ENCODE measurements at regions of chr1 and their contacts with region 1.

Region 1: GRCh38 chr1:32179443-32180185 is at the start of gene TXLNA:
- DNase-seq: peak; percentile 97
- H3K4me3 Mint-ChIP-seq: peak within 1 kb of the TSS; percentile 98
- H3K27ac Mint-ChIP-seq: peak within 1 kb of the TSS; percentile 99
- H3K4me1 Mint-ChIP-seq: peaks cover 39% of the 10 kb centered on the region
- H3K27me3 Mint-ChIP-seq: no peaks in the 10 kb centered on the region
- total RNA-seq, gene TXLNA: 105 and 106 TPM in 2 replicates

Region 2: DNA sequence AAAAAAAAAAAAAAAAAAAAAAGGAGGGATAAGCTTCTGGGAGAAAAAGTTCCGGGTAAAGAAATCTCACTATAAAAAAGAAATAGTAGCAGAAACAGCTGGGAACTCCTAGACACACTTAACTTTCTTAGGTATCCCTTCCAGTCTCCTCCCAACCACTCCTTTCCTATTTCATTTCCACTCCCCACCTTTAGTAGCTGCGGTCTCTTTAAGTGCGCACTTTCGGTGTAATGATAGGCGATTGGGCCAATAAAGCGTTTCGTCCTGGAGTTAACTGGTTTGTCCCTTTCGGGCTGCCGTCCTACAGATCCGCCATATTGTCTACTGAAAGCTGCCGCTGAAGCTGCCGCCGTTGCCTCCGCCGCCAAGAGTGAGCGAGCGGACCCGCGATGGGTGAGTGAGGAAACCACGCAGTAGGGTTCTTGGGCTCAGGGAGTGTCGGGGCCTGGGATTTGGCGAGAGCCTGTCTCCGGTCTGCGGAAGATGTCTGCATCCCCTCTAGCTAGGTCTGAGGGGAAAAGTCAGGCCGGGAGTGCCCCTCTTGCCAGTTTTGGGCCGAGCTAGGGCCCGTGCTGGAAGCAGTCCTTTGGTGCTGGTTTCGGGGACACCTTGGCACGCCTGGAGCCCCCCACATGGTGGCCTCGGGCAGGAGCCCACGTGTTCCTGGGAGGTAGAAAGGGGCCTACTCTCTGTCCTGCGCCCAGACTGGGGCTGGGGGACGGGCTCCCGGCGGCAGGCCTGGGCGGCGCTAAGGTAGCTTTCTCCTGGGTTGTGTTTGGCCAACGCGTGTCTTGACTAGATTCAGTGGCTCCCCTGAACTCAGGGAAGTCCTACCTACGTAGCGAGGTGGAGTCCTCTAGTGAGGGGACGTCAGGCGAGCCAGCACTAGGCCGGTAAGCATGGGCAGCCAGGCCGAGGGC is 71.6 kb before region 1 on chr1 and contains the start of gene KPNA6:
- intact Hi-C with region 1: loop called (anchors 1 kb)
- DNase-seq: peak; percentile 97
- H3K4me3 Mint-ChIP-seq: peak within 1 kb of the TSS; percentile 99
- H3K27ac Mint-ChIP-seq: peak within 1 kb of the TSS; percentile 98
- H3K4me1 Mint-ChIP-seq: peaks cover 31% of the 10 kb centered on the region
- H3K27me3 Mint-ChIP-seq: no peaks in the 10 kb centered on the region
- total RNA-seq, gene KPNA6: 79.4 and 87.6 TPM in 2 replicates

Region 3: DNA sequence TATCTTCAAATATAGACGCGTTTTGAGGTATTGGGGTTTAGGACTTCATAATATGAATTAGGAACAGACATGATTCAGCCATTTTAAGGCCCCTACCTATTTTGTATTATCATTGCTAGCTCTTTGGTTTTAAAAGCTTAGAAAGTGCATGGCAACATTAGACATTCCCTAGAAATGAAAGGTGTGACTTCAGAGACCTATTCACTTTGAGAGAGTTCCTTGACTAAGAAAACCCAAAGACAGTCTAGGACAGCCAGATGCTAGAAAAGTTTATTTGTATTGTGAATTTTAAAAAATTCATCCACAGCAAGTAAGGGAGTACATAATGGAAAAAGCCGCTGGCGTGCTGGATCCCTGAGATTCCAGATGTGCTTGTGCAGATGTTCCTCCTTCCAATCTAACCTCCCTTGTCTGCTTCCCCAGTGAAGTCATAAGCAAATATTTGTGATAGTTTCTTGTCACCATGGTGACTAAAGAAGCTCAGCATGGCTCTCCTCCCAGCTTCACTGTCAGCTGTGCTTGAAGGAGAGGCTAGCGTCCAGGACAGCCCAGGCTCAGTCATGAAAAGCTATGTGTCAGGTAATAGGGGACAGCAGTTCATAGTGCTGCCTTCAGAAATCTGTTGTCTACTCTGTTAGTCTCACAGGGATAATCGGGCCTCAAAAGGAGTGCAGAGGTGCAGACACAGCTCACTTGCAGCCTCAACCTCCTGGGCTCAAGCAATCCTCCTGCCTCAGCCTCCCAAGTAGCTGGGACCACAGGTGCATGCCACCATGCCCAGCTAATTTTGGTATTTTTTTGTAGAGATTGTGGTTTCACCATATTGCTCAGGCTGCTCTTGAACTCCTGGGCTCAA is 36.9 kb before region 1 on chr1:
- intact Hi-C with region 1: loop called (anchors 5 kb)
- DNase-seq: no peak
- H3K4me3 Mint-ChIP-seq: no peak overlapping the region
- H3K27ac Mint-ChIP-seq: peak overlapping the region; percentile 36
- H3K4me1 Mint-ChIP-seq: peaks cover 34% of the 10 kb centered on the region
- H3K27me3 Mint-ChIP-seq: no peaks in the 10 kb centered on the region

Region 4: DNA sequence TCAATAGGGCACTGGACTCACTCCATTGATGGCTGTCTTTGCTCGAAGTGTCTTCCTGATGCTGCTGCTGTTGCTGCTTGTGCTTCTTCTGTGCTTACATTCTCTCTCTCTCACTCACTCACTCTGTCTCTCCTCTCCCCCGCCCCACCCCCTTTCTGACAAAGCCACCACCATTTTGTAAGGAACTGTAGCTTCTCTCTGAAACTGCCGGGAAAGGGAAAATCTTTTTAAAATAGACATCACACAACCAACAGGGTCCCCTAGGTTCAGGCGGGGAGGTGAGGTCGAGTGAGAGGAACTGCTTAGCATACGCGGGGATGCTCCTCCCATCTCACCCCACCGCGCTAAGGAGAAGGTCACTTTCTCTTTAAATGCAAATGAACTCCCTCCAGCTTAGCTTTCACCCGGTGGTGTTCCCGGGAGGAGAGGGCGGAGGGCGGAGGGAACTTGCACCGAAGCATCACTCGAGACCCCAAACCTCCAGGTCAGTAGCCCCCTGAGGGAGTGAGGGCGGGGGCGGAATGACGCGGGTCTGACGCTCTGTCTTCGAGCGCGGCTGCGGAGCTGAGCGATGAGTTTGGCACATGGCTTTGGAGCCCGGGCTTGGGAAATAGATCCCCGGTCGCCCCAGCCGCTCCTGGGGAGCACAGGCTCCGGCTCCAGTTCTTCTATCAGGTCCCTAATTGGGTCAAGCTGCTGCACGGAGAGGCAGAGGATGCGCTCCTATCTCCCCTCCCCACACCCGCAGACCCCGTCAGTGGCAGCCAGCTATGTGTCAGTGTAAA is 20.8 kb after region 1 on chr1 and contains the start of gene CCDC28B:
- intact Hi-C with region 1: loop called (anchors 1 kb)
- DNase-seq: peak; percentile 89
- H3K4me3 Mint-ChIP-seq: peak within 1 kb of the TSS; percentile 90
- H3K27ac Mint-ChIP-seq: peak within 1 kb of the TSS; percentile 95
- H3K4me1 Mint-ChIP-seq: peaks cover 62% of the 10 kb centered on the region
- H3K27me3 Mint-ChIP-seq: no peaks in the 10 kb centered on the region
- total RNA-seq, gene CCDC28B: 37.1 and 38.1 TPM in 2 replicates

Measured in activated CD4-positive, alpha-beta T cell treated with anti-CD3 and anti-CD28 coated beads, Interleukin-2, amount 10 ng/mL, durations not matched to agents 24 days and 14 days (primary cell).